ENCODE measurements at regions of chr10 and their contacts with region 1.

Region 1: GRCh38 chr10:103685880-103686669 is 169.3 kb downstream of the SH3PXD2A start:
- DNase-seq: peak; percentile 84
- ATAC-seq: peak; percentile 98
- H3K4me3 Mint-ChIP-seq: no peak overlapping the region
- H3K27ac Mint-ChIP-seq: no peak overlapping the region
- H3K4me1 Mint-ChIP-seq: peaks cover 1% of the 10 kb centered on the region
- H3K27me3 Mint-ChIP-seq: no peaks in the 10 kb centered on the region
- CTCF ChIP-seq: peak; percentile 90

Region 2: GRCh38 chr10:103396064-103396788 is 289.8 kb before region 1 on chr10 and contains the starts of genes ATP5MK and PDCD11:
- CTCF ChIA-PET with region 1: no interaction called
- POLR2A ChIA-PET with region 1: no interaction called
- intact Hi-C with region 1: no loop called
- DNase-seq: peak; percentile 99
- ATAC-seq: peak; percentile 100
- H3K4me3 Mint-ChIP-seq: peak within 1 kb of the TSS; percentile 88
- H3K27ac Mint-ChIP-seq: peak within 1 kb of the TSS; percentile 97
- H3K4me1 Mint-ChIP-seq: peaks cover 59% of the 10 kb centered on the region
- H3K27me3 Mint-ChIP-seq: no peaks in the 10 kb centered on the region
- CTCF ChIP-seq: no peak
- total RNA-seq, gene ATP5MK: 404 to 425 TPM
- total RNA-seq, gene PDCD11: 63.7 to 68.8 TPM

Region 3: GRCh38 chr10:103517234-103518085 is 168.6 kb before region 1 on chr10:
- CTCF ChIA-PET with region 1: no interaction called
- POLR2A ChIA-PET with region 1: no interaction called
- intact Hi-C with region 1: no loop called
- DNase-seq: no peak
- ATAC-seq: peak; percentile 58
- H3K4me3 Mint-ChIP-seq: no peak overlapping the region
- H3K27ac Mint-ChIP-seq: peak overlapping the region; percentile 0
- H3K4me1 Mint-ChIP-seq: peaks cover 19% of the 10 kb centered on the region
- H3K27me3 Mint-ChIP-seq: peaks cover 10% of the 10 kb centered on the region
- CTCF ChIP-seq: no peak

Region 4: DNA sequence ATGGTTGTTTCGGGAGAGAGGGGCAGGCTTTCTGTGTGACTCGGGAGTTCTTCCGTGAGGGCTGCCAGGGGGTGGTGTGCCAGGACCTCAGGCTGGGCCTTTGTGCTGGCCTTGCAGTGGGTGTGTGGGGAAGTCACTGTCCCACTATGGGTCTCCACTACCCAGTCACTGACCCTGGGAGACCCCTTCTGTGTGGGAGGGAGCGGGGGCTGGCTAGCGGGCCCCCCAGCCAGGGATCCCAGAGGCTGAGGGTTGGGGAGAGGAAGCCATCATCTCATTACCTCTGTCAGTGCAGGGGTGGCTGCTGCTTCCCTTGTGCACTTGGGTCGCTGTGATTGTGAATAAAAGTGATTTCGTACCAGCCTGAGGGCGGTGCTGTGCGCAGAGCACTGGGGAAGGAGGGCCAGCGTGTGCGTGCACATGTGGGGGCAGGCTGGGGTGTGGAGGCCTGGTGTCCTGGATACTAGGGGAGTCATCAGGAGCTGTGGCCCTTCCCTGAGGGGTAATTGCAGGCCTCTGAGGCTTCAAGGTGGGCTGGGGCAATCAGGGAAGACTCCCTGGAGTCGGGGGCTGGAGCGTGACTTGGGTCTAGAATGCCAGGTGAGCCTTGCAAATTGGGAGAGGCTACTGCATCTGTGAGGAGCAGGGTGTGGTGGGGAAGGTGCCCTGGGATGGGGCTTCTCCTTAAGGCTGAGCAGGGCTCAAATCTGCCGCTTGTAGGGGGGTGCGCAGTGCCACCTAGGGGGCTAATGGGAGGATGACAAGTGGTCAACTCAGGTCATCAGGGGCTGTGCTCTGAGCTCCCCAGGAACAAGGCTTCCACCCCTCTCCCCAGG is 93.7 kb before region 1 on chr10:
- CTCF ChIA-PET with region 1: interaction called, 56 read pairs
- POLR2A ChIA-PET with region 1: no interaction called
- intact Hi-C with region 1: no loop called
- DNase-seq: peak; percentile 73
- ATAC-seq: peak; percentile 91
- H3K4me3 Mint-ChIP-seq: no peak overlapping the region
- H3K27ac Mint-ChIP-seq: no peak overlapping the region
- H3K4me1 Mint-ChIP-seq: no peaks in the 10 kb centered on the region
- H3K27me3 Mint-ChIP-seq: no peaks in the 10 kb centered on the region
- CTCF ChIP-seq: peak; percentile 66

Region 5: DNA sequence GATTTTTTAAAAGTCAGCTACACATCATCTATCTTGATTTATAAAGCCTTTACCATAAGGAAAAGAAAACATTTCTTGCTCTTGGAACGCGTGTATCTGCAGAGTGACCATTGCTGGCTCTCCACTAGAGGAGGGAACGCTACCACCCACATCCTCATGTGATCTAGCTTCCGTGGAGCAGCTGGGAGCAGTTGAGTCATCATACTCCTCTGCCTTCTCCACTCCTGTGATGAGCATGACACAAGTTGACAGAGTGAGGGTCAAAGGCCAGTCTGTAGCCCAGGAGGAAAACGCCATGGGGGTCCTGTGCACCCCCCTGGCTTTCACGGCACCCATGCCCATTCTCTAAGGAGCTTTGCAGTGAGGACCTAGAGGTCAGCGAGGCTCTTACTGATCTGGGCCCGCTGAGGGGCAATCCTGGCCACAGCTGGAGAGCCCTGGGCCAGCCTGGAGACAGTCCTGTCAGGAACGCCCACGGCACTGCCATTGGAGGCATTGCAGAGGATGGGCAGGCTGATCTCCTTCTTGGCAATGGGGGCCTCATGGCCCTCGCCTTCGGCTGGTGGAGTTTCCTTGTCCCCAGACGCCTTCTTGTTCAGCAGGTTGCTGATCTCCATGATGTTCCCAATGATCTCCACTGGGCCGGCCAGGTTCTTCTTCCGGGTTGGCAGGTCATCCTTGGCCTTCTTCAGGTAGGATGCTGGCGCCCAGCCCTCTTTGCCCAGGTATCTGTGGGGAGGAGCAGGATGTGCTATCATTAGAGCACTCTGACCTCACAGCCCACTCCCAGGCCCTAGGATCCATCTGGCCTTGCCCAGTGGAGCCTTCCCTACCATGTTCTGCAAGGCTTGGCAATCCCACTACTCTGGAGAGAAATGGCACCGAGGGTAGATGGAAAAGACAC is 73.4 kb before region 1 on chr10:
- CTCF ChIA-PET with region 1: interaction called, 53 read pairs
- POLR2A ChIA-PET with region 1: no interaction called
- intact Hi-C with region 1: no loop called
- DNase-seq: no peak
- ATAC-seq: no peak
- H3K4me3 Mint-ChIP-seq: no peak overlapping the region
- H3K27ac Mint-ChIP-seq: no peak overlapping the region
- H3K4me1 Mint-ChIP-seq: no peaks in the 10 kb centered on the region
- H3K27me3 Mint-ChIP-seq: no peaks in the 10 kb centered on the region
- CTCF ChIP-seq: no peak

Region 6: DNA sequence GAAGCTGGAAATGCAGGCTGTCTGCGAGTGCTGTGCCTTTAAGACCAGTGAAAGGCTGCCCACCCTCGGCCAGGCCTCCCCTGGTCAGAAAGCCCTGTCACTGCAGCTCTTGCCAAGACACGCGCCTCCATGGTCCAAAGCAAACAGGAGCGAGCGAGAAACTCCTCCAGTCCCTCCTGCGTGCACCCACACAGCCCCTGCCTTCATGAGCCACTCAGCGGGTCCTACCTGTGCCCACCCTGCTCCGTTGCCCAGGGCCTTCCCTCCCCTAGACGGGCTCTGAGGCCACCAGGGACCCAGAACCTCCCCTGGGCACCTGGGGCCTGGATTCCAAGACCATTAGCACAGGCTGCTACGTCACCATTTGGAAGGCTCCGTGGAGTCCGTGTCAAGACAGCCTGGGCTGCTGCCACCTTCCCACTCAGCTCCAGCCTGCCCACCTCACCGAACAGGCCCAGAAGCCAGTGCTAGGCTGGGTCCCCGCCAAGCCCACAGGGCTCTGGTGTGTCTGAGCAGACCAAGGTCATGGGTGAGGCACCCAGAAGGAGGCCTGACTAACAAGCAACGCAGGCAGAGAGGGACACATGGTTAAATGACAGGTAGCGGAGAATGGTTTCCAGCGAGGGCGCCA is 48.0 kb before region 1 on chr10:
- CTCF ChIA-PET with region 1: interaction called, 15 read pairs
- POLR2A ChIA-PET with region 1: no interaction called
- intact Hi-C with region 1: no loop called
- DNase-seq: no peak
- ATAC-seq: no peak
- H3K4me3 Mint-ChIP-seq: no peak overlapping the region
- H3K27ac Mint-ChIP-seq: no peak overlapping the region
- H3K4me1 Mint-ChIP-seq: no peaks in the 10 kb centered on the region
- H3K27me3 Mint-ChIP-seq: no peaks in the 10 kb centered on the region
- CTCF ChIP-seq: no peak

Region 7: GRCh38 chr10:103659674-103660363 is 26.3 kb before region 1 on chr10:
- CTCF ChIA-PET with region 1: interaction called, 21 read pairs
- POLR2A ChIA-PET with region 1: no interaction called
- intact Hi-C with region 1: no loop called
- DNase-seq: peak; percentile 73
- ATAC-seq: peak; percentile 89
- H3K4me3 Mint-ChIP-seq: peak overlapping the region; percentile 83
- H3K27ac Mint-ChIP-seq: peak overlapping the region; percentile 85
- H3K4me1 Mint-ChIP-seq: peaks cover 14% of the 10 kb centered on the region
- H3K27me3 Mint-ChIP-seq: no peaks in the 10 kb centered on the region
- CTCF ChIP-seq: peak; percentile 42

Region 8: DNA sequence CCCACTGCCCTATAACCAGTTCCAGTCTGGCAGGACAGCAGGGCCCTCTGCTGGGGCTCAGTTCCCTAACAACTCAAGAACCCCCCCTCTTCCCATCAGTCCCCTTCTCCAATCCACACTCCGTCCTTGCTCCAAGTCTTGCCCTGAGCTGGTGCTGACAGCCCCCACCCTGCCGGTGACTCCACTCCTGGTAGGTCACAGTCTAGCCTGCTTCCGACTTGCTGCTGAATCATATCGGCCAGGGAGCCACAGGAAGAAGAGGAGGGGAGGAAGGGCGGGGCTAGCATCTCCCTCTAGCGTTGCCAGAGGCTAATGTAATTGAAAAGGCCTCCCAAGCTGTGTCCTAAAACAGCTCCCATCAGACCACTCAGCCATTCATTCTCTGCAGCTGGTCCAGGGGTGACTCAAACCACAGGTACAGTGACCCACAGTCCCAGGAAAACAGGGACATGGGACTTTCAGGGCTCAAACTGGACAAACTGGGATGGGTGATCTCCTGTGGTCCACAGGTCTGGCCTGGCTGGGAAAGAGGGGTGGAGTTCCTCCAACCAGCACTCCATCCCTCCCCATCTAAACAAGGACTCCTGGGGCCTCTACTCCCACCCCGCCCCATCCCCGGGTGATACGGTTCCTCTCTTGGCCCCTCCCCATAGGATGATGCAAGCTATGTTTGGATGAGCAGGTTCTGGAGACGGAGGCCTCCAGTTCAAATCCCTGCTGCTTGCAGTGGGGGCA is 10.5 kb after region 1 on chr10:
- CTCF ChIA-PET with region 1: interaction called, 30 read pairs
- POLR2A ChIA-PET with region 1: interaction called, 3 read pairs
- intact Hi-C with region 1: no loop called
- DNase-seq: peak; percentile 89
- ATAC-seq: peak; percentile 90
- H3K4me3 Mint-ChIP-seq: peak overlapping the region; percentile 1
- H3K27ac Mint-ChIP-seq: peak overlapping the region; percentile 8
- H3K4me1 Mint-ChIP-seq: peaks cover 19% of the 10 kb centered on the region
- H3K27me3 Mint-ChIP-seq: peaks cover 4% of the 10 kb centered on the region
- CTCF ChIP-seq: peak; percentile 53

Region 9: GRCh38 chr10:104065748-104066147 is 379.7 kb after region 1 on chr10:
- CTCF ChIA-PET with region 1: no interaction called
- POLR2A ChIA-PET with region 1: no interaction called
- intact Hi-C with region 1: no loop called
- DNase-seq: no peak
- ATAC-seq: no peak
- H3K4me3 Mint-ChIP-seq: no peak overlapping the region
- H3K27ac Mint-ChIP-seq: no peak overlapping the region
- H3K4me1 Mint-ChIP-seq: no peaks in the 10 kb centered on the region
- H3K27me3 Mint-ChIP-seq: peaks cover 1% of the 10 kb centered on the region
- CTCF ChIP-seq: no peak